Common myeloid progenitor, CD34-positive (primary cell): ENCODE measurements at regions of chr3 and their contacts with region 1.

Region 1: DNA sequence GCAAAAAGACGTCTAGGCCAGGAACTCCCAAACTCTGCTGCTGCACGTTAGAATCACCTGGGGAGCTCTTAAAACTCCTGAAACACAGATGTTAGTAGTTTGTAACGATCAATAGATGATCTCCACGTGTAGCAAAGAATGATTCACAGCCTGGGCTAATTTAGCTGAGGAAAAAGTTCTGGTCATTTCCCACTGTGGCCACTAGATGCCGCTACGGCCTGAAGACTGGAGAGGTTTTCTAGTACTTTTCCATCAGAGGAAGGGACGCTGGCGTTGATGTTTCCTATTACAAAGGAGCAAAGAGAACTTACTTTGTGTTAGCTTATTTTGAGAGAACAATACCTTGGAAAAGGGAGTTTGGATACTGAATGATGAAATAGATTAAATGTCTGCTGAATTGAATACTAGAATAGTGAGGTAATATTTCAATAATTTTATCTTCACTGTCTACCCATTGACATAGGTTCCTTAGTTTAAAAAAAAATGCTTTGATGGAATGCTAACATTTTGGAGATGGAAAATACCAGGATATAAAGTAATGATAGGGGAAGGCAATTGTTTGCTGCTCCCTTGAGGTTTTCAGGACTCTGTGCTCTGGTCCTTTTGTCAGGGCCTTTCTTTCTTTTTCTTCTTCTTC is 159.1 kb downstream of the P3H2 start:
- DNase-seq: peak; percentile 68 to 85 (median 74)
- H3K4me3 ChIP-seq: no peak overlapping the region
- H3K27ac ChIP-seq: no peak overlapping the region
- H3K4me1 ChIP-seq: peaks cover 0 to 10% (median 1%) of the 10 kb centered on the region in 4 experiments
- H3K27me3 ChIP-seq: peaks cover 0 to 19% (median 2%) of the 10 kb centered on the region in 5 experiments

Region 2: GRCh38 chr3:189941679-189942078 is 20.0 kb before region 1 on chr3:
- CTCF ChIA-PET with region 1: interaction called, 14 read pairs
- POLR2A ChIA-PET with region 1: no interaction called
- DNase-seq: no peak
- H3K4me3 ChIP-seq: no peak overlapping the region
- H3K27ac ChIP-seq: no peak overlapping the region
- H3K4me1 ChIP-seq: no peaks in the 10 kb centered on the region
- H3K27me3 ChIP-seq: peaks cover 0 to 7% (median 2%) of the 10 kb centered on the region in 5 experiments

Region 3: DNA sequence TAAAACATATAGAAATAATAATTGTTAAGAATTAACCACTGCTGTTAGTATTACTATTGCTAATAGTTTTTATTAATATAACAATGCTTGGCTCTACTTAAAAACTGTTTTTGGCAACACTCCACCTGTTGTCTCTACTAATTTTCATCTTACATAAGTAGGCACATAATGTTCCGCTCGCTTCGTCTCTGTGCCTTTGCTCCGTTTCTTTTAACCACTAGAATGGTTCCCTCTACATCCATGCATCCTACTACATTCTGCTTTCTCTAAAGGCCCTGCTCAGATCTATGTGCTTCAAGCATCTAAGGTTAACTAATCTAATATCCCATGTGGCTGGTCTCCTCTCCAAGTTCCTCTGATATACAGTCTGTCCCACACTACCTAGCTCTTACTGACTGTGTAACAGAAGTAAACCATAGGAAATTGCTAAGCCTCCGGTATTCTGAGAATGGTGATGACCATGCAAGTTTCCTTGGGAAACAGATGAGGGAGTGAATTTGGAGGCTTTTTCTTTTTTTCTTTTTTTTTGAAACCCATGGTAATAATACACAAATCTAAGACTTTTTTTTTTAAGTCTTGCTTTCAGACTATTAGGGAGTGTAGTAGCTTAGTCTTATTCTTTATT is 20.8 kb after region 1 on chr3:
- CTCF ChIA-PET with region 1: interaction called, 12 read pairs
- POLR2A ChIA-PET with region 1: no interaction called
- DNase-seq: peak; percentile 26 to 66 (median 60)
- H3K4me3 ChIP-seq: no peak overlapping the region
- H3K27ac ChIP-seq: no peak overlapping the region
- H3K4me1 ChIP-seq: peaks cover 0 to 29% (median 14%) of the 10 kb centered on the region in 4 experiments
- H3K27me3 ChIP-seq: no peaks in the 10 kb centered on the region

Region 4: DNA sequence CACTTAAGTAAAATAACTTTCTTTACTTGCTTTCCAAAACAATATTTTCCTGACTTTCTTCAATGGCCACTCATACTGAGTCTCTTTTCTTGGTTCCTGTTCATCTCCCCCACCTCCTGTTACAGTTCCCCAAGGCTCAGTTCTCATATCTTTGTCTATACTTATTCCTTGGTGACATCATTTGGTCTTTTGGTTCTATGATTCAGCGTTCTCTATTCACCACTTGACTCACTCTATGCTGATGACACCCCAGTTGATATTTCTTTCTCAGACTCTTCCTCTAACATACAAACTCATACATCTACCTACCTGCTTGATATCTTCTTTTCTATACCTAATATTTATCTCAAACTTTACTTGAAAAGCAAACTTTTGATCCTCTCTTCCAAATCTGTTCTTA is 244.1 kb after region 1 on chr3:
- CTCF ChIA-PET with region 1: interaction called, 26 read pairs
- POLR2A ChIA-PET with region 1: no interaction called
- DNase-seq: peak in 2 of 3 donors; percentile 13 to 17
- H3K4me3 ChIP-seq: no peak overlapping the region
- H3K27ac ChIP-seq: no peak overlapping the region
- H3K4me1 ChIP-seq: peaks cover 0 to 4% (median 0%) of the 10 kb centered on the region in 4 experiments
- H3K27me3 ChIP-seq: peaks cover 0 to 3% (median 1%) of the 10 kb centered on the region in 5 experiments

Region 5: DNA sequence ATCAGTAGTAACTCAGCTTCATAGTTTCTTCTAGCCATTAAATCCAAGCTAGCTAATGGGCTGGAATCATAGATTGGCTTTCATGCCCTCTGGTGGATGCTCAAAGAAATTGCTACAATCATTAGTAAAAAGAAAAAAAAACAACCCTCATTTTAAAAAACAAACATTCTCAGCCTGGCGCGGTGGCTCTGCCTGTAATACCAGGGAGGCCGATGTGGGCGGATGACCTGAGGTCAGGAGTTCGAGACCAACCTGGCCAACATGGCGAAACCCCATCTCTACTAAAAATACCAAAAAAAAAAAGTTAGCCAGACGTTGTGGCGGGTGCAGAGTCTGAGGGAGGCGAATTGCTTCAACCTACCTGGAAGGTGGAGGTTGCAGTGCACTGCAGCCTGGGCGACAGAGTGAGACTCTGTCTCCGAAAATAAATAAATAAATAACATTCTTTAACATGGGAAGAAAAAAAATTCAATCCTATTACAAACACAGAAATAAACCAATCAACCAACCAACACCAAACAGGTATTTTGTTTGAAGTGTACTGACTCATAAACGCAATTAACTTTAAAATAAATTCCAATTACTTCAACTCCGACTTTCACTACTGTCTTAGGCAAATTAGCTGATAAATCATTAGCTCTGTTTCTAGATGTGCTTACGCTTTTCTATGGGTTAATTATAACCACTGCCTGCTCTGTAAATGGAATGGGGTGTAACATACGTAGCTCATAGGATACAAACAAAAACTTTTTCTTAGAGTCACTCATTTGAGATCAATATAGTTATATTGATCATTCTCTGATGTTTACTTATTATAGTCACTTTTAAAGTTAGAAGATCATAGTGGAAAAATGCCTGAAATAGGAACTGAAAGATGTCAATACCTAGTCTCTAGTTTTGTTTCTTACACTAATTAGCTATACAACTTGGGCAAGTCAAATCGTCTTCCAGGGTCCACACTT is 463.1 kb after region 1 on chr3:
- CTCF ChIA-PET with region 1: interaction called, 30 read pairs
- POLR2A ChIA-PET with region 1: no interaction called
- DNase-seq: peak; percentile 64 to 78 (median 76)
- H3K4me3 ChIP-seq: no peak overlapping the region
- H3K27ac ChIP-seq: no peak overlapping the region
- H3K4me1 ChIP-seq: no peaks in the 10 kb centered on the region
- H3K27me3 ChIP-seq: peaks cover 0 to 26% (median 4%) of the 10 kb centered on the region in 5 experiments